Mammary epithelial cell (primary cell): ENCODE measurements at regions of chr18 and their contacts with region 1.

Region 1: GRCh38 chr18:6920099-6920899 is 190.8 kb downstream of the ARHGAP28 start:
- DNase-seq: peak; percentile 64
- H3K4me3 ChIP-seq: no peak overlapping the region
- H3K27ac ChIP-seq: no peak overlapping the region
- H3K4me1 ChIP-seq: no peaks in the 10 kb centered on the region
- H3K27me3 ChIP-seq: no peaks in the 10 kb centered on the region
- CTCF ChIP-seq: peak; percentile 96 to 97

Region 2: GRCh38 chr18:6781786-6782185 is 138.5 kb before region 1 on chr18:
- CTCF ChIA-PET with region 1: no interaction called
- dilution Hi-C with region 1: no loop called
- in situ Hi-C with region 1: no loop called
- intact Hi-C with region 1: no loop called
- DNase-seq: peak; percentile 20
- H3K4me3 ChIP-seq: no peak overlapping the region
- H3K27ac ChIP-seq: no peak overlapping the region
- H3K4me1 ChIP-seq: no peaks in the 10 kb centered on the region
- H3K27me3 ChIP-seq: no peaks in the 10 kb centered on the region
- CTCF ChIP-seq: no peak

Region 3: DNA sequence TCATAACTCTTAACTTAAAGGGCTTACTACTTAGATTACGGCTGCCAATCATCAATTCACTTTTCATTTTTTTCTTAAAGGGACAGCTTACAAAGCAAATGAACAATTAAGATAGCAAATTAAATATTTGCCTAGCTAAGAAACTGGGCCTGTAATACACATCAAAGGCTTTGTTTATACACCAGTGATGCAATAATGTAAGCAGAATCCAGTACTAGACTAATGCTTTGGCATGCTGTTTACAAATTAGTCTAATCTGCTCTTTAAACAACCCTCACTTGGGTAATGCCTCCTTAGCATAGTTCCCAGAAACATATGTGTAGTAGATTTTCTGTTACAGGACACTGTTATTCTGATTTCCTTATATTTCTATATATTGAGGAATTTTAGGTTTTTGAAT is 85.0 kb before region 1 on chr18:
- CTCF ChIA-PET with region 1: no interaction called
- dilution Hi-C with region 1: no loop called
- in situ Hi-C with region 1: no loop called
- intact Hi-C with region 1: no loop called
- DNase-seq: no peak
- H3K4me3 ChIP-seq: no peak overlapping the region
- H3K27ac ChIP-seq: no peak overlapping the region
- H3K4me1 ChIP-seq: peaks cover 12% of the 10 kb centered on the region
- H3K27me3 ChIP-seq: no peaks in the 10 kb centered on the region
- CTCF ChIP-seq: no peak

Region 4: DNA sequence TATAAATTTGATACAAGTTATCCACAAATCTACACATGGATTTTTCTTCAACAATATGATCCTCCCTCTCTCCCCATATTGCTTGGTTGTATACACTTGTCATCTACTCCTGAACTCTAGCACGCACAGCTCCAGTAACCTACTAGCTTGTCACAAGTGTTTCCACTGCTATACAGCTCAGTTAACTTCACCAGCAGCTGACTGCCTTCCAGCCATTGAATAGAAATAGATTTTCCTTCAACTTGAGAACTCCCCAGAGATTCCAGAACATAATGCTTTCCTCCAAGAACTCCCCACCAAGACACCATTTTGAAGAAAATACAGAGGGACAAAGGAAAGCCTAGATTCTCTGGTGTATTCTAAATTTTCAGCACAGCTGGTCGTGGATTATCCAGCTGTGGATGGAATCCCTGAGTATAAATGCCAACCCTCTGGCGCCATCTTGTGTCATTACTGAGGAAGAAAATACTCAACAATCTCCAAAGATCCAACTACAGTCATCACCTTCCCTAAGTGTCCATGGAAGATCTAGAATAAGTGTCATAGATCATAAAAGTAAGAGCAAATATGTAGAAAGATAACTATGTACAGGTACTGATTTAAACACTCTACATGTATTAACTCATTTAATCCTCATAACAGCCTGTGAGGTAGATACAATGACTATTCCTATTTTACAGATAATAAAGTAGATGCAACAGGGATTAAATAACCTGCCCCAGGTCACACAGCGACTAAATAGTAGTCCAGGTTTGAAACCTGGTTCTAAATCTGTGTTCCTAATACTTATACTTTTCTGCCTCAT is 34.1 kb before region 1 on chr18:
- CTCF ChIA-PET with region 1: no interaction called
- dilution Hi-C with region 1: no loop called
- in situ Hi-C with region 1: no loop called
- intact Hi-C with region 1: no loop called
- DNase-seq: peak; percentile 32
- H3K4me3 ChIP-seq: no peak overlapping the region
- H3K27ac ChIP-seq: no peak overlapping the region
- H3K4me1 ChIP-seq: no peaks in the 10 kb centered on the region
- H3K27me3 ChIP-seq: peaks cover 3% of the 10 kb centered on the region
- CTCF ChIP-seq: peak; percentile 60 to 71

Region 5: DNA sequence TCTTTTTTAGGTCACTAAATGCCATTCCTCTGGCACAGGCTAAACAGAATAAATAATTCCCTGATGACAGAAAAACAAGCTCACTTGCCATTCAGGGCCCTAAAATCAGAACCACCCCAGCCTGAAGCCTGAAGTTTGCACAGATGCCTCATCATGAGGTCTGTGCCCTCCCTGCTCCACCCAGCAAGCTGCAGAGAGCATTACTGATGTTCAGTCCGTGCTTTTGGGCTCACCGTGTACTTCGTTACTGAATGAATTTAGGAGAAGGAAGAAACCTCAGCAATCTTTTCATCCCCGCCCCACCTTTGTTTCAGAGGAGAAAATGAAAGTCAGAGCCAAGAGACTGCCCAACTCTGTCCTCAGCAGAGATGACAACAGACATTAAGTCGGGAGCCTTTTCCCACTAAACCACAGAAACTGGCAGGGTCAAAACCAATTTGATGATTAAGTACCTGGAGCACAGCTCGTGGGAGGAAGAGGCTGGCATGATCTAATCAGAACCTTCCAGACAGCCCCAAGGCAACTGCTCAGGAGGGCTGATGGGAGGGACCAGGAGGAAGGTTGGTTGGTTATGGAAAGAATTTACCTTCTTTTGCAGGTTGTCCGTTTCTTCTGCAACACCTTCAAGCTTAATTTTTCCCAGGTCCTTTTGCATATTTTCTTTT is 74.6 kb after region 1 on chr18:
- CTCF ChIA-PET with region 1: interaction called, 4 read pairs
- dilution Hi-C with region 1: no loop called
- in situ Hi-C with region 1: loop called in 1 of 2 experiments (anchors 5 kb)
- intact Hi-C with region 1: loop called (anchors 1 kb)
- DNase-seq: peak; percentile 99
- H3K4me3 ChIP-seq: peak overlapping the region in 2 of 3 experiments; percentile 0 to 30
- H3K27ac ChIP-seq: peak overlapping the region; percentile 93
- H3K4me1 ChIP-seq: peaks cover 18% of the 10 kb centered on the region
- H3K27me3 ChIP-seq: no peaks in the 10 kb centered on the region
- CTCF ChIP-seq: no peak

Region 6: GRCh38 chr18:7000484-7001096 is 80.3 kb after region 1 on chr18:
- CTCF ChIA-PET with region 1: no interaction called
- dilution Hi-C with region 1: no loop called
- in situ Hi-C with region 1: loop called in 1 of 2 experiments (anchors 5 kb)
- intact Hi-C with region 1: loop called (anchors 1 kb)
- DNase-seq: peak; percentile 39
- H3K4me3 ChIP-seq: no peak overlapping the region
- H3K27ac ChIP-seq: no peak overlapping the region
- H3K4me1 ChIP-seq: no peaks in the 10 kb centered on the region
- H3K27me3 ChIP-seq: no peaks in the 10 kb centered on the region
- CTCF ChIP-seq: peak; percentile 55 to 74

Region 7: GRCh38 chr18:7021994-7022840 is 101.9 kb after region 1 on chr18:
- CTCF ChIA-PET with region 1: interaction called, 4 read pairs
- dilution Hi-C with region 1: no loop called
- in situ Hi-C with region 1: loop called in 1 of 2 experiments (anchors 5 kb)
- intact Hi-C with region 1: loop called (anchors 1 kb)
- DNase-seq: peak; percentile 61
- H3K4me3 ChIP-seq: no peak overlapping the region
- H3K27ac ChIP-seq: no peak overlapping the region
- H3K4me1 ChIP-seq: no peaks in the 10 kb centered on the region
- H3K27me3 ChIP-seq: no peaks in the 10 kb centered on the region
- CTCF ChIP-seq: peak; percentile 69

Region 8: DNA sequence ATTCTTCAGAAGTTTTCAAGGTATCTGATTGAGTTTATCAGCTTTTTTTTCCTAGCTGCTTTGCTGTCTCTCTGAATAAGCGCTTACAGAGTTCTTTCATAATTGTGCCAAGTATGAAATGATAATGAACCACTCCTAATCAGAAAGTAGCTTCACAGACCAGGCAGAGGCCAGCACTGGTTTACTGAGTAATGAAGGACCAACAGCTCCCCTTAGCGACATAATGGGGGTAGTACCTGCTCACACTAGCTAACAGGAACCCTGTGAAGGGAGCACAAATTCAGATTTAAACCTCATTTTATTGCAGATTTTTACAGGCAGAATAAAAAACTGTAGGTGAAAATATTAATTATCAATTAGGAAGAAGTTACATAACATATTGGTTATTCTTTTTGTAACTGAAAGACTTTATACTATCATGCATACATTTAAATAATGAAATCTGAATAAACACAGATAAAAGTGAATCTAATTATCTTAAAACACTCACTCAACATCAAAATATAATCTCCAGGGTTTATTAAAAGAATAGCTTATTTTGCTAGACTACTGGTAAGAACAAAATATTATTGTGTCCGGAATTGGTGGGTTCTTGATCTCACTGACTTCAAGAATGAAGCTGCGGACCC is 256.9 kb after region 1 on chr18:
- CTCF ChIA-PET with region 1: interaction called, 10 read pairs
- dilution Hi-C with region 1: loop called (anchors 25 kb)
- in situ Hi-C with region 1: loop called (anchors 5 to 10 kb)
- intact Hi-C with region 1: loop called (anchors 1 kb)
- DNase-seq: peak; percentile 72
- H3K4me3 ChIP-seq: no peak overlapping the region
- H3K27ac ChIP-seq: no peak overlapping the region
- H3K4me1 ChIP-seq: no peaks in the 10 kb centered on the region
- H3K27me3 ChIP-seq: no peaks in the 10 kb centered on the region
- CTCF ChIP-seq: peak; percentile 87 to 91